Posterior cingulate gyrus (tissue), 11 donors: ENCODE measurements at regions of chr18 and their contacts with region 1.

Region 1: DNA sequence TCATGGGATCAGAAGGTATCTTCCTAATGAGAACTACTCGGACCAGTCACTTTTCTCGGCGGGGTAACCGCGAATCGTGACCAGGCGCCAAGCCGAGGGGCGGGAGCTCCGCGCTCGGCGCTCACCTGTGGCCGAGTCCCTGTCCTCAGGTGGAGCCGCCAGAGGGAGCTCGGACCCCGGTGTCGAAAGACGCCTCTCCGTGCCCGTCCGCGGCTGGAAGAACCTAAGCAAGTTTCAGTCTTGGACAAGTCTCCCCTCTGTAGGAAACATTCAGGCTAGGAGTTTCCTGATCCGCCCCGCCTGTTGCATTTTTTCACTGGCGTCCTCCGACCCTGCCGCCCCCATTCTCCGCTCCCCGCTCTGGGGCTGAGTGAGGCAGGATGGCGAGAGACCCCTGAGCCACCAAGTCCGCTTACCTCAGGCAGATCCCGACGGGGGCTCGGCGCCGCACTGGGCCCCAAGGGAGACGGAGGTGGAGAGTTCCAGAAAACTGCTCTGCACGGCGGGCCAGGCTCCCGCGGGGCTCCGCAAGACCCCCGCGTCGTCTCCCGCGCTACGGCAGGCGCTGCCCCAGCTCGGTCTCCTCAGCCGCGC is 478 bp downstream of the DSEL start:
- DNase-seq: peak; percentile 80 to 98 (median 88)

Region 2: GRCh38 chr18:67463829-67464228 is 52.2 kb before region 1 on chr18:
- intact Hi-C with region 1: loop called (anchors 5 kb)
- DNase-seq: no peak

Region 3: GRCh38 chr18:67840379-67840778 is 324.3 kb after region 1 on chr18:
- intact Hi-C with region 1: loop called (anchors 5 kb)
- DNase-seq: no peak

Region 4: DNA sequence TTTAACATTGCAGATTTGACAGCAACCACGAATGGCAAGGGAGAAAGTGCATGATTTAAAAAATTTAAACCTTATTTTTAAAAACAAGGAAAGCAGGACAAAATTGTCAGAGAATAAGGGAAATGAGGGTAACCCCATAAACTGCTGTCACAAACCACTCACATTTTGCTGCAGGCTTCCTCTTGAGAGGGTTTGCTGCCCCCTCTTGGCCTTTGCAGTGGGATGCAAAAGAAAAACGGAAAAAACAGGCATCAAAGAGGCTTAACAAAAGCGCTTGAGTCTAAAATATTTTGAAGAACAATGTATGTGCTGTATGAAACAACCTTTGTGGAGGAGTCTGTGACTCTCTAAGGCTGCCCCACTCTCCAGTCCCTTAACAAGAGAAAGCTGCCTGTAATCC is 1107.3 kb after region 1 on chr18:
- intact Hi-C with region 1: loop called (anchors 10 kb)
- DNase-seq: peak in 9 of 10 donors; percentile 19 to 90 (median 64)